ENCODE measurements at regions of chr1 and their contacts with region 1.

Region 1: DNA sequence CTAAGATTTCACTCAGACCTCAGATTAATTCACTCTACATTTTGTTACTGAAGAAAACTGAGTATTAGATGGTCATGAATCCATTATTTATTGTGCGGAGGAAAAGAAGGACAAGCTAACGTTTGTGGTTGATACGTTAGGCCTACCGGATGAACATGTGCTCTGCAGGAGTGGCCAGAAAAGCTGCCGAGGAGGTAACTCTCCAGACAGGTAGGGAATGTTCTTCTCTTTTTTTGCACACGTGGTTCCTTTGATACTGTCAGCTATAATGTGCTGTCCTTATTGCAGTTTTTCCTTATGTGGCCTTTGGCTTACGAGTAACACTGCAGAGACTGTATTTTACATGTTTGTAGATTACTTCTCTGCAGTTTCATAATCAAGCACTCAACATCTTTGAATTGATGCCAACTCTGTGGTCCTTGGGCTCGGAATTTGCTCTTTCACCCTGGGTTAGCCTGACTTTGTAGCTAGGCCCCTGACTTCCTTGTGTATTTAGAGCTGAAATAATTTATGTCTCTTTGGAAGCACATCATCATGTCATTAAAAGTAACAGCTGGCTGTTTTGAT is 13.6 kb downstream of the MTR start:
- H3K4me3 ChIP-seq: no peak overlapping the region
- H3K27ac ChIP-seq: no peak overlapping the region
- H3K4me1 ChIP-seq: no peaks in the 10 kb centered on the region
- CTCF ChIP-seq: no peak

Region 2: GRCh38 chr1:236534151-236534651 is 274.4 kb before region 1 on chr1:
- CTCF ChIA-PET with region 1: no interaction called
- POLR2A ChIA-PET with region 1: no interaction called
- H3K4me3 ChIP-seq: no peak overlapping the region
- H3K27ac ChIP-seq: no peak overlapping the region
- H3K4me1 ChIP-seq: peaks cover 2% of the 10 kb centered on the region; the same call in 1 of the 2 replicates
- CTCF ChIP-seq: no peak

Region 3: GRCh38 chr1:236795035-236795756 is 13.5 kb before region 1 on chr1 and contains the start of gene MTR:
- CTCF ChIA-PET with region 1: interaction called, 4 read pairs
- POLR2A ChIA-PET with region 1: interaction called, 11 read pairs
- H3K4me3 ChIP-seq: peak within 1 kb of the TSS; percentile 73
- H3K27ac ChIP-seq: peak within 1 kb of the TSS; percentile 78
- H3K4me1 ChIP-seq: peaks cover 6% of the 10 kb centered on the region; the same call in 1 of the 2 replicates
- CTCF ChIP-seq: peak; percentile 74; the same call in 1 of the 2 replicates

Region 4: GRCh38 chr1:236966636-236967035 is 158.0 kb after region 1 on chr1:
- CTCF ChIA-PET with region 1: no interaction called
- POLR2A ChIA-PET with region 1: no interaction called
- H3K4me3 ChIP-seq: no peak overlapping the region
- H3K27ac ChIP-seq: no peak overlapping the region
- H3K4me1 ChIP-seq: no peaks in the 10 kb centered on the region
- CTCF ChIP-seq: no peak

Measured in HEK293 (cell line).